HEK293 (cell line): ENCODE measurements at regions of chrX and their contacts with region 1.

Region 1: DNA sequence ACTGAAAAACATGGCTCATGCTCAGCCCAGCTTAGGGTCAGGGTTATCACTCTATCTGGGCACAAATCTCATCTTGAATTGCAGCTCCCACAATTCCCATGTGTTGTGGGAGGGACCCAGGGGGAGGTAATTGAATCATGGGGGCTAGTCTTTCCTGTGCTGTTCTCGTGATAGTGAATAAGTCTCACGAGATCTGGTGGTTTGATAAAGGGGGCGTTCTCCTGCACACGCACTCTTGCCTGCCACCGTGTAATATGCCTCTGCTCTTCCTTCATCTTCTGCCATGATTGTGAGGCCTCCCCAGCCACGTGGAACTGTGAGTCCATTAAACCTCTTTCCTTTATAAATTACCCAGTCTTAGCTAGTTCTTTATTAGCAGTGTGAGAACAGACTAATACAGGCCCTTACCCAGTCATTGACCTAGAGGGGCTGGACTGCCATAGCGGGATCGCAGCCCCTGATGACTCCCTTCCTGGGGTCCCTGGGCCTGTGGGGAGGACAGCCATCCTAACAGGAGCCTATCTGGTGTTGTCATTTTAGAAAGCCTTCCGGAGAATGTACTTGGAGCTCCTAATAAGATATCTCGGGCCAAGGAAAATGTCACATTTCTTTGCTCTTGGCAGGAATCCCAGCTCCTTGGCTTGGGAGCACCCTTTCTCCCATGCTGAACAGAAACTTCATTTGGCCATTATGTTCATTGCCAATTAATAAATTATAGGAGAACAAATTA is 112.6 kb downstream of the PHKA2 start:
- H3K4me3 ChIP-seq: no peak overlapping the region
- H3K27ac ChIP-seq: no peak overlapping the region
- H3K4me1 ChIP-seq: no peaks in the 10 kb centered on the region; the same call in 1 of the 2 replicates
- CTCF ChIP-seq: no peak

Region 2: DNA sequence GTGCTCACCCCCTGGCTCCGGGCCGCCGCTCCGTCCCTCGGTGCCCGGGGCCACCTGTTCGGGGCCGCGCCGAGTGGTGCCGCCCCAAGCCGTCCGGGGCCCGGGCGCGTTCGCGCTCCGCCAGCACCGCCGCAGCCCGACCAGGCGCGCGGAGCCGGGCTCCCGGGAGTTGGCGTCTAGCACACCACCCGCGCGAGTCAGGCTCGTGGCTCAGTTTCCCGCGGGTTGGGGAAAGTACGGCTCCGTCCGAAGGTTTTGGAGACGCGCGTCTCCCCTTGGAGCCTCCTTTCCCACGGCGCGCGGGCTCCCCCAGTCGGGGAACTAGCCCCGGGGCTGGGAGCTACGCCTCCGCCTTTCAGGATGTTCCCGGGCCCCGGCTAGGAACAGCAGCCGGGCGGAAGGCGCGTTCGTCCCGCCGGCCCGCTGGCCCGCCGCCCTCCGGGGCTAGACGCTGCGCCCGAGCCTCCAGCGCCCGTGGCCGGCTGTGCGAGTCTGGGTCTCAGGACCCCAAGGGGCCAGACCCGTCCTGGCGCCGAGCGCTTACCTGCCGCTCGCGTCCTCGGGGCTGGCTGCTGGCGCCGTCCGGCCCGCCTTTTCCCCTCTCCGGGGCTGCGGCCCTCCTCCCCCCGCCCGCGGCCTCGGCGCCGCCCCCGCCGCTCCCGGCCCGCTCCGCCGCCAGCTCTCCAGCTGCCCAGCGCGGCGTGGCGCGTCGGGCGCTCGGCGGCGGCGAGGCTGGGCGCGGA is 250.7 kb after region 1 on chrX and contains the start of gene ADGRG2:
- CTCF ChIA-PET with region 1: interaction called, 10 read pairs
- POLR2A ChIA-PET with region 1: no interaction called
- H3K4me3 ChIP-seq: peak within 1 kb of the TSS; percentile 48
- H3K27ac ChIP-seq: peak within 1 kb of the TSS; percentile 53; the same call in 1 of the 2 replicates
- H3K4me1 ChIP-seq: no peaks in the 10 kb centered on the region
- CTCF ChIP-seq: peak; percentile 52